ENCODE measurements at regions of chr19 and their contacts with region 1.

Region 1: GRCh38 chr19:7211204-7211951 is 82.8 kb downstream of the INSR start:
- DNase-seq: no peak

Region 2: DNA sequence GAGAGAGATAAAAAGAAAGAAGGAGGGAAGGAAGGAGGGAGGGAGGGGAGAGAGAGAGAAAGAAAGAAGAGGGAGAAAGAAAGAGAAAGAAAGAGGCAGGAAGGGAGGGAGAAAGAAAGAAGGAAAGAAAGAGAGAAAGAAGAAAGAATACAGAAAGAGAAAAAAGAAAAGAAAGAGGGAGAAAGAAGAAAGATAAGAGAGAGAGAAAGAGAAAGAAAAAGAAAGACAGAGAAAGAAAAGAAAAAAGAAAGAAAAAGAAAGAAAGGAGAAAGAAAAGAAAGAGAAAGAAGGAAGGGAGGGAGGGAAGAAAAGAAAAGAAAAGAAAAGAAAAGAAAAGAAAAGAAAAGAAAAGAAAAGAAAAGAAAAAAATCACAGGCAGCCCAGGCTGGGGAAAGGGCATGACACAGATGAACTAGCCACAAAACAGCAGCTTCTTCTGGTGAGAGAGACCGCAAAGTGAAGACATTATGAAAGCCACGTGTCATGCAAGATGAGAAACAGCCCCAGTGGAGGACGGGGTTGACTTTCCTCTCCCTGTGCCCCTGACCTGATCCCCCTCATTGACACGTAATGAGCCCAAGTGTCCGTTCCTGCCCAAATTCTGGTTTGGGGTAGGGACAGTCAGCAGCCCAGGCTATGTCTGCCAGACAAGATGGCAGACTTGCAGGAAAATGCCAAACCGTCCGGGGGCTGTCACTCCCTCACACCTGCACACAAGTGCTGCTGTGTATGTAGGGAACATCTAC is 19.3 kb before region 1 on chr19:
- intact Hi-C with region 1: no loop called
- DNase-seq: no peak

Region 3: DNA sequence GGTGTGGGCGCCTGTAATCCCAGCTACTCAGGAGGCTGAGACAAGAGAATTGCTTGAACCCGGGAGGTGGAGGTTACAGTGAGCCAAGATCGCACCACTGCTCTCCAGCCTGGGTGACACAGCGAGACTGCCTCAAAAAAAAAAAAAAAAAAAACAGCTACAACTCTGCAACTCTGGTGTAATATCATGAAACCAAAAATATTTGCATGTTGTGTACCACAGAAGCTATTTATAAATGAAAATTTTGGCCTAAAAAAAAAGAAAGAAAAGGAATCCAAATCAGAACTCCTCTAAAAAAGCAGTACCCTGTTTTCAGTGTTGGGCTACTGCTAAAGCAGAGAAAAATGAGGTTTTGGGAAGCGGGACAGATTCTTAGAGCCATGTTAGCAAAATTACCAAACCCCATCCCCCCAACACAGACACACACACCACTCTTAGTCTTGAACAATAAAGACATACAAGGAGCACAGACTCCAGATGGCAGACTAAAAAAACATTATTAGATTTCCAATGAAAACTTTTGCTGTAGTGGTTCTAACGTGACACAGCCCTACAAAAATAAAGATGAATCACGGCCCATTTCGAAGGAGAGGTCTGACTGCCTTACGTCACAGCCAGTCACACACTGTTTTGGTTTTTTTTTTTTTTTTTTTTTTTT is 31.4 kb after region 1 on chr19:
- intact Hi-C with region 1: loop called in 1 of 2 experiments (anchors 5 kb)
- DNase-seq: no peak

Measured in posterior vena cava (tissue), 2 donors.